ENCODE measurements at regions of chr11 and their contacts with region 1.

Region 1: DNA sequence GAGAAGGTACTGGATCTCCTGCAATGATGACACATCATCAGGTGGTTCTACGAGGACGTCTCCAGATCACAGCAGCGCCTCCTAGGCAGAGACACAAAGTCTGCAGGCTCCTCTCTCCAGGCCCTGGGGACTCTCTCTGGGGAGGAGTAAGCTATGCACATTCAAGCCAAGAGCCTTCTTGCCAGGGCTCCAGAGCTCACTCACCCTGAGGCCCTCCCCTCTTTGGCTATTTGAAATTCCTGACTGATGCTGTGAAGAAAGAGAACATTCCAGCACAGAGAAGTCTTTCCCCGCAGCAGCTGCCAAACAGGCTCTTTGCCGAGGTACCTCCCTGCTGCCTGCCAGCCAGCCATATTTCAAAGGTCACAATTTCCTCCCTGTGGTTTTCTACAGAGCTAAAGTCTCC is 204.9 kb downstream of the CSNK2A3 start:
- DNase-seq: peak; percentile 60 to 73
- H3K4me3 ChIP-seq: no peak overlapping the region
- H3K27ac ChIP-seq: no peak overlapping the region
- H3K4me1 ChIP-seq: no peaks in the 10 kb centered on the region; a peak in 1 of 7 replicates
- H3K27me3 ChIP-seq: no peaks in the 10 kb centered on the region; a peak in 1 of 7 replicates
- CTCF ChIP-seq: peak; percentile 56 to 71 (median 63)
- EP300 ChIP-seq: no peak
- POLR2A ChIP-seq: no peak
- RAD21 ChIP-seq: peak; percentile 25 to 39; a peak in 2 of 4 replicates

Region 2: GRCh38 chr11:11135820-11136465 is 12.2 kb before region 1 on chr11:
- CTCF ChIA-PET with region 1: interaction called, 19 read pairs
- POLR2A ChIA-PET with region 1: no interaction called
- DNase-seq: no peak
- H3K4me3 ChIP-seq: no peak overlapping the region
- H3K27ac ChIP-seq: no peak overlapping the region
- H3K4me1 ChIP-seq: peaks cover 0 to 2% (median 0%) of the 10 kb centered on the region in 4 experiments; a peak in 1 of 7 replicates
- H3K27me3 ChIP-seq: no peaks in the 10 kb centered on the region
- CTCF ChIP-seq: no peak
- EP300 ChIP-seq: no peak
- POLR2A ChIP-seq: no peak
- RAD21 ChIP-seq: no peak